Posterior cingulate gyrus (tissue), 11 donors: ENCODE measurements at regions of chr14 and their contacts with region 1.

Region 1: GRCh38 chr14:75249251-75249957 is 29.2 kb upstream of the FOS start:
- DNase-seq: peak in 1 of 10 donors; percentile 14

Region 2: DNA sequence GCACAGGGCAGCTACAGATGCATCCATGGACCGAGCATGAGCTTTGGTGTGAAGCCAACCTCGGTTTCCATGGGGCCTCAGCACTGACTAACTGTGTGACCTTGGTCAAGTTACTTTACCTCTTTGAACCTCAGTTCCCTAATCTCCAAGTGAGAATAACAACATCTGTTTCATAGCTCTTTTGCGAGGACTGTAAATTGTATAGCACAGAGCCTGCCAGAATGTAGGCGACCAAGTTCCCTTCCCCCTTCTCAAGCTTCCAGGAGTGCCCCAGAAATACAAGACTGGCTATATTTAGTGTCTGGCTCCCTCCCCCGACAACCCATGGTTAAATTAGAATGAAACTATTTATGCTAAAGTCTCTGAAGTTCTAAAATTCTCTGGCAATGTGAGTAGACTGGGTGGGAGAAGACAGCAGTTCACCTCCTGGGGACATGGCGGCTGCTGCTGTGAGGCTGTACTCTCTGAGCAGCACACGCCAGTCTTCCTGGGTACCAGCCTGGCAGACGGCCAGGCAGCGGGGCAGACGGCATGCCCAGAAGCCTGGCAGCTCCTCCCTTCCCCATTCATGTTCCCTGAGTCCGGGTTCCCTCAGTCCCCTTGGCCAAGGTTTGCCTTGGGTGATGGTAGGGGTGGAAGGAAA is 51.0 kb before region 1 on chr14:
- intact Hi-C with region 1: loop called (anchors 10 kb)
- DNase-seq: peak in 9 of 10 donors; percentile 17 to 89 (median 39)